Psoas muscle (tissue), 8 donors: ENCODE measurements at regions of chr13 and their contacts with region 1.

Region 1: DNA sequence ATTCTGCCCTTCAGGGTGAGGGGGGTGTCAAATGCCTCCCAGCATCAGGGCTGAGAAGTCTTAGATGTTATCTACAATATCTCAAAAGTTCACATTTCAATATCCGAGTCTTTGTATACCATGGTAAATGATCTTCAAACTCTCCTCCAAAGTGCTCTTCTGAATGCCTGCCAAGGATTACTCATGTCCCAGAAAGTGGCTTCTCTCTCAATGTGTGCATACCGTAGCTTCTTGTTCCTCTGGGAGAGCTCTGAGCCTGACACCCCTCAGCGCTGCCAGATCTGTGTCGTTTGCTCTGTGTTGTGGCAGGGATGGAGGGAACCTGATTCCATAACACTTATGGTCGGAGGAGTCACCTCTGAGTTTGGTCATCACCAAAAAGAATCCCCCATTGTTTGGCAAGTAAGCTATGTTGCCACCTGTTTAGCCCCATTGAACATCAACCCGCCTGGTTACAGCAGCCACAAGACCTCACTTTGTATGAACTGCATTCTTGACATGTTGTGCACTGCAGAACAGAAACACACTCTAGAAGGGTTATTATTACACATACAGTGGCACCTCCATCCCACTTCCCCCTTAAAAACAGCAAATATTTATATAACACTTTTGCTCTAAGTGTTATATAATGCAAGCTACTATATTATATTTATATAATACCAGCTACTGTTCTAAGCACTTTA is 163.1 kb upstream of the MIR17HG start:
- DNase-seq: no peak
- ATAC-seq: peak in 1 of 4 donors; percentile 28
- H3K4me3 ChIP-seq: no peak overlapping the region
- H3K27ac ChIP-seq: no peak overlapping the region
- H3K4me1 ChIP-seq: no peaks in the 10 kb centered on the region
- H3K27me3 ChIP-seq: no peaks in the 10 kb centered on the region
- CTCF ChIP-seq: no peak

Region 2: GRCh38 chr13:91133941-91134802 is 50.2 kb before region 1 on chr13:
- intact Hi-C with region 1: loop called in 1 of 2 experiments (anchors 2 kb)
- DNase-seq: no peak
- ATAC-seq: peak in 3 of 4 donors; percentile 68 to 80 (median 68)
- H3K4me3 ChIP-seq: no peak overlapping the region
- H3K27ac ChIP-seq: no peak overlapping the region
- H3K4me1 ChIP-seq: no peaks in the 10 kb centered on the region
- H3K27me3 ChIP-seq: no peaks in the 10 kb centered on the region
- CTCF ChIP-seq: peak; percentile 71

Region 3: DNA sequence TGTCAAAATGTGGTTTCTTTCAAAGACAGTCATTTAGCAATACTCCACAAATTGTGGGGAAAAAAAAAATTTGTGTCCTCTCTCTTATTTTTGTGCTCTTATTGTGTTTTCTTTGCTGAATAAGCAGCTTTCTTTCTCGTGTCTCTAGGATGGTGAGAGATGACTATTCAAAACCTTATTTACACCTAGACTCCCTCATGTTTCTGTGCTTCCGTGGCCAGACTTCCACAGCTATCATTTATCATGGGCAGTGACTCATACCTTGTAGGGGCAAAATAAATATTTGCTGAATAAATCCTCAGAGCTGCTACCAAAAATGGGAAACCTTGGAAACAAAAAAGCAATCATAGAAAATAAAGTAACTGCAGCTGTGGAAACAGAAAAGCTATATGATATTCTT is 41.8 kb before region 1 on chr13:
- intact Hi-C with region 1: loop called in 1 of 2 experiments (anchors 5 kb)
- DNase-seq: no peak
- ATAC-seq: no peak
- H3K4me3 ChIP-seq: no peak overlapping the region
- H3K27ac ChIP-seq: no peak overlapping the region
- H3K4me1 ChIP-seq: no peaks in the 10 kb centered on the region
- H3K27me3 ChIP-seq: no peaks in the 10 kb centered on the region
- CTCF ChIP-seq: no peak

Region 4: DNA sequence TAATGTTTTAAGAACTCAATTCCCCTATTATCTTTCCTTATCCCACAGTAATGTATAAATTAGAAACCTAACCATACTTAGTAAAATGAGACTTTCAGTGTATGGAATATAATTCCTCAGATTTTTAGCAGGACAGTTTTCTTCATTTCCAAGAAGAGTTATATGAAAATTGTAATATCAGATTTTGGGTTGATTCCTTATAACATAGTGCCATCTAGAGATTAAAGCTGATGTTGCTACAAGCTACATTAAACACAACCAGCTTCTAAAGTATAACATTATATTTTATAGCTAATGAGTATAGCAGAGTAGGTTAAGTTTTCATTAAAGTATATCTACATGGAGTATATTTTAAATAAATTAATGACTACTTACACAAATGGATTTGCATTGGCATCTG is 63.4 kb after region 1 on chr13:
- intact Hi-C with region 1: no loop called
- DNase-seq: no peak
- ATAC-seq: no peak
- H3K4me3 ChIP-seq: no peak overlapping the region
- H3K27ac ChIP-seq: no peak overlapping the region
- H3K4me1 ChIP-seq: no peaks in the 10 kb centered on the region
- H3K27me3 ChIP-seq: peaks cover 0 to 2% (median 0%) of the 10 kb centered on the region in 3 donors
- CTCF ChIP-seq: peak; percentile 11